H1 (cell line): ENCODE measurements at regions of chr14 and their contacts with region 1.

Region 1: GRCh38 chr14:104144911-104145745 is 6.7 kb downstream of the KIF26A start:
- DNase-seq: peak in 1 of 2 experiments; percentile 43
- H3K4me3 ChIP-seq: no peak overlapping the region
- H3K27ac ChIP-seq: no peak overlapping the region
- H3K4me1 ChIP-seq: peaks cover 0 to 37% (median 27%) of the 10 kb centered on the region in 4 experiments; a peak in 6 of 7 replicates
- H3K27me3 ChIP-seq: no peaks in the 10 kb centered on the region
- CTCF ChIP-seq: no peak
- EP300 ChIP-seq: no peak
- POLR2A ChIP-seq: no peak
- RAD21 ChIP-seq: no peak

Region 2: GRCh38 chr14:104119488-104120251 is 25.5 kb before region 1 on chr14:
- CTCF ChIA-PET with region 1: no interaction called
- POLR2A ChIA-PET with region 1: no interaction called
- DNase-seq: peak in 1 of 2 experiments; percentile 43
- H3K4me3 ChIP-seq: no peak overlapping the region
- H3K27ac ChIP-seq: no peak overlapping the region
- H3K4me1 ChIP-seq: peaks cover 0 to 11% (median 3%) of the 10 kb centered on the region in 4 experiments; a peak in 6 of 7 replicates
- H3K27me3 ChIP-seq: peaks cover 17 to 39% (median 28%) of the 10 kb centered on the region in 4 experiments
- CTCF ChIP-seq: no peak
- EP300 ChIP-seq: no peak
- POLR2A ChIP-seq: no peak
- RAD21 ChIP-seq: no peak

Region 3: GRCh38 chr14:104157016-104157928 is 12.1 kb after region 1 on chr14:
- CTCF ChIA-PET with region 1: interaction called, 16 read pairs
- POLR2A ChIA-PET with region 1: no interaction called
- DNase-seq: no peak
- H3K4me3 ChIP-seq: no peak overlapping the region
- H3K27ac ChIP-seq: no peak overlapping the region
- H3K4me1 ChIP-seq: no peaks in the 10 kb centered on the region; a peak in 1 of 7 replicates
- H3K27me3 ChIP-seq: no peaks in the 10 kb centered on the region
- CTCF ChIP-seq: peak in 2 of 3 experiments; percentile 54 to 57; a peak in 3 of 4 replicates
- EP300 ChIP-seq: no peak
- POLR2A ChIP-seq: no peak
- RAD21 ChIP-seq: peak; percentile 46 to 63